Activated T-helper 1 cell treated with anti-CD3 and anti-CD28 coated beads, Interleukin-12 subunit alpha, Interleukin-12 subunit beta, Interleukin-2, Interleukin-4 antibody, amounts not matched to agents 30 ng/mL and 10 ng/mL and 1 ng/mL, durations not matched to agents 14 hours and 24 hours and 36 hours (primary cell): ENCODE measurements at regions of chr1 and their contacts with region 1.

Region 1: DNA sequence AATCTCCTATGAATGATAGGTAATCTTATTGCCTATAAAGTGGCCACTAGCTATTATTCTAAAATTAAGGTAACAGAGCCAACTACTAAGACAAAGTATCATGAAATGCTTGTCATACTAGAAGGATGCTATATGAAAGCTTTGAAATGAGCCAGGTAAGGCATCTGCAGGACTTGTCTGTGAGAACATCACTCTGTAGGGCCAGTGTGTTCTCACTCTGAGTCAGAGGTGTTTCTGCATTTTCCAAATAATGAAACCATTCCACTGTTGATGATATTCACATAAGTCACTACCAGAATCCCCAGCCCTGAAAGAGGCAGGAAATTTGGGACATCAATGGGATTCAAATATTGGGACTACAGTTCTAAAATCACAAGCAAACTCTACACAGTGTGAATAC is 25.8 kb upstream of the GBP5 start:
- DNase-seq: no peak
- H3K4me3 Mint-ChIP-seq: peak overlapping the region; percentile 37
- H3K27ac Mint-ChIP-seq: peak overlapping the region; percentile 75
- H3K4me1 Mint-ChIP-seq: peaks cover 81% of the 10 kb centered on the region
- H3K27me3 Mint-ChIP-seq: no peaks in the 10 kb centered on the region

Region 2: GRCh38 chr1:89286549-89287180 is 11.8 kb before region 1 on chr1:
- intact Hi-C with region 1: loop called (anchors 1 kb)
- DNase-seq: peak; percentile 29
- H3K4me3 Mint-ChIP-seq: peak overlapping the region; percentile 41
- H3K27ac Mint-ChIP-seq: peak overlapping the region; percentile 92
- H3K4me1 Mint-ChIP-seq: peaks cover 83% of the 10 kb centered on the region
- H3K27me3 Mint-ChIP-seq: no peaks in the 10 kb centered on the region

Region 3: DNA sequence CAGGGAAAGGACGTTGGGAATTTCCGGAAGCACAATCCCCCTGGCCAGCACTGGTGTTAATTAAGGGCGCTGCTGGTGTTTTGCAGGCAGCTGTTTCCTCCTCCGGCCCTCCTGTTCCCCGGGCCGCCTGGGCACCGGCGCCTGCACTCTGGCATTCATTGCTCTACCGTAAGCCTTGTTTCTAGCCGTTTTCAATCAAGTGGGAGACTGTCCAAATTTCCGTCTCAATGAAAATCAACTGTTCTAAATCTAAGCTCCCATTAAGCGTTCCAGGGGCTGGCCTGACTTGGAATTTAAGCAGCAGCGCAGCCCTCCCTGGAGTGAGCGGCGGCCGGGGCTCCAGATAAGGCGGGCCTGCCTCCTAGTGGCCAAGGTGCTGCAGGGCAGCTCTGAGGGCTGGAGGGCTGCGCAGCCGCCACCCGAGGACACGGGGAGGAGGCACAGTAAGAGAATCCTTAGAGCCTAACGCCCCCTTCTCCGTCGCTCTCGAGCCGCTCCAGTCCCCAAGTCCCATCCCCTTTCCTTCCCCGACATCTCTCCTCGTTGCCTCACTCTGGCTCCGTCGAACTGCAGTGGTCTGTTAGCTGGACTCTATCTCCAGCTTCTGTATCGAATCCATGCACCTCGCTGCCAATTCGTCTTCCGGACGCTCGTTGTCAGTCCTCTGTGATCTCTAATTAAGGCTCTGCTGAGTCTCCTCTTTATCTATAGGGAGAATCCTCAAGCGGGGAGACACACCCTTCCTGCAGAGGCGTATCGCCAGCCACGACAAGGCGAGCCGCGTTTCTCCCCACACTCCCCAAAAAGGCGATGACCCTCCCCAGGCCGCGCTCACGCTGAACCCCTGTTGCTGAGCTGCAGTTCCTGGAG is 464.6 kb after region 1 on chr1:
- intact Hi-C with region 1: no loop called
- DNase-seq: peak; percentile 78
- H3K4me3 Mint-ChIP-seq: peak overlapping the region; percentile 92
- H3K27ac Mint-ChIP-seq: peak overlapping the region; percentile 93
- H3K4me1 Mint-ChIP-seq: peaks cover 63% of the 10 kb centered on the region
- H3K27me3 Mint-ChIP-seq: no peaks in the 10 kb centered on the region